Panc1 (cell line): ENCODE measurements at regions of chr9 and their contacts with region 1.

Region 1: GRCh38 chr9:129685220-129685932 is 19.9 kb downstream of the PRRX2 start:
- DNase-seq: no peak
- ATAC-seq: peak; percentile 83
- H3K4me3 ChIP-seq: no peak overlapping the region
- H3K27ac ChIP-seq: no peak overlapping the region
- H3K4me1 ChIP-seq: no peaks in the 10 kb centered on the region
- H3K27me3 ChIP-seq: no peaks in the 10 kb centered on the region
- CTCF ChIP-seq: no peak

Region 2: DNA sequence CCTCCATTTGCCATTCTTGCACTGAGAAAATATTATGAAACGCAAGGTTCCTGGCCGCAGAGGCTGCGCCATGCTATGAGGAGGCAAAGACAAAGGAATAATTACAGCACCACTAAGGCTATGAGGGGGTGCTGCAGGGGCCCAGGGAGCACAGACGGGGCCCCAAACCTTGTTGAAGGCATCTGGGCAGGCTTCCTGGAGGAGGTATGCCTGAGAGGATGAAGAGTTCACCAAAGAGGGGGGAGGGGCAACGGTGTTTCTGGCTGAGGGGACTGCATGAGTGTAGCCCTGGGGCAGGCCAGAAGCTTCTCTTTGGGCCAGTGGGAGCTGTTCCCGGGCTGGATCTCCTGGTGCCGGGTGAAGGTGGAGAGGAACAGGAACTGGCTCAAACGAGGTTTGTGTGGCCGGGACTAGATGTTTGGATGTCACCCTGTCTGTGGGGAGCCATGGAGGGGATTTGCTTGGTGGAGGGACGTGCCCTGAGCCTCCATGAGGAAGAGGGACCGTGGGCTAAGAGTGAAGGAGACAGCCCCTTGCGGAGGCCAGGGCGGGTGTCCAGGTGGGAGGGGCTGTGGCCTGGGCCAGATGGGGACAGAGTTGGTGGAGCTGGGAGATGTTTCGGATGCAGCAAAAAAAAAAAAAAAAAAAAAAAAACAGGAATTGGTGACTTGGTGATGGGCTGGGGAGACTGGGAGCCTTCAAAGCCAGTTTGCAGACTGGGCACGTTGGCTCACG is 39.2 kb after region 1 on chr9:
- CTCF ChIA-PET with region 1: interaction called, 3 read pairs
- POLR2A ChIA-PET with region 1: interaction called, 10 read pairs
- in situ Hi-C with region 1: no loop called
- intact Hi-C with region 1: no loop called
- DNase-seq: no peak
- ATAC-seq: no peak
- H3K4me3 ChIP-seq: no peak overlapping the region
- H3K27ac ChIP-seq: no peak overlapping the region
- H3K4me1 ChIP-seq: no peaks in the 10 kb centered on the region
- H3K27me3 ChIP-seq: no peaks in the 10 kb centered on the region
- CTCF ChIP-seq: no peak